ENCODE measurements at regions of chr18 and their contacts with region 1.

Region 1: DNA sequence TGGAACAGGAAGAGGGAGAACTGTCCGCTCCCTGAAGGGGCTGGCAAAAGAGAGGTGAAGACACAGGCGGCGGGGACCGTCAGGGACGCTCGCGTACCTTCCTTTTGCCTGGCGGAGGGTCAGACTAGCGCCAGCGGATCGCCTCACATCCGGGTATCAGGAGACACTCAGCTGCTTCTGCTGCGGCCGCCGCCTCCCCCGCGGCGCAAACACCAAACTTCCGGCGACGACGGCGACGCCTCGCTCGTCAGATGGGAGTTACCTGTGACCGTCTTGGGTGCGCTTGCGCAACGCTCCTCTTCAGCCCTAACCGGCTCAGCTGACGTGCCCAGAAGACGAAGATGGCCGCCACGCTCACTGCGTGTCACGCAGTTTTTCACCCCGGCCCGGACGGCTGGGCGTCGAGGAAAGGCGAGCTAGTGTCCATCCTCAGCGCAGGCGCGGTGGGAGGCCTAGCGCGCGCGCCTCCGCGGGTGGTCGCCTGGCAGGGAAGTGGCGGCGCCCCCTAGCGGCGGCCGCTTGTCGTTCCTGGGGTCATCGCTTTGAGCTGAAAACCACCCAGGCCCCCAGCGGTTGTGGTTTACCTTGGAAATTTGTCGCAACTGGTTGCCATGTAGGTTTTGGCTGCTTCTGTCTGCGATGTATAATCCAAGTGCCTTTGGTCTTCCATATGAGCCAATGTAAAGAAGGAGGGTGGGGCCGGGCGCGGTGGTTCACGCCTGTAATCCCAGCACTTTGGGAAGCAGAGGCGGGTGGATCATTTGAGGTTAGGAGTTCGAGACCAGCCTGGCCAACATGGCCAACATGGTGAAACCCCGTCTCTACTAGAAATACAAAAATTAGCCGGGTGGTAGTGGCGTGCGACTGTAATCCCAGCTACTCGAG is at the start of gene ESCO1:
- DNase-seq: peak; percentile 93
- ATAC-seq: peak; percentile 94 to 97 (median 96)
- H3K4me3 ChIP-seq: peak within 1 kb of the TSS; percentile 81 to 100 (median 92)
- H3K27ac ChIP-seq: peak within 1 kb of the TSS; percentile 86 to 99 (median 97)
- H3K4me1 ChIP-seq: peaks cover 0 to 46% (median 24%) of the 10 kb centered on the region in 9 donors
- H3K27me3 ChIP-seq: no peaks in the 10 kb centered on the region
- CTCF ChIP-seq: peak; percentile 93 to 100 (median 98)
- total RNA-seq, gene ESCO1: 8.7 to 12.9 (median 9.9) TPM

Region 2: DNA sequence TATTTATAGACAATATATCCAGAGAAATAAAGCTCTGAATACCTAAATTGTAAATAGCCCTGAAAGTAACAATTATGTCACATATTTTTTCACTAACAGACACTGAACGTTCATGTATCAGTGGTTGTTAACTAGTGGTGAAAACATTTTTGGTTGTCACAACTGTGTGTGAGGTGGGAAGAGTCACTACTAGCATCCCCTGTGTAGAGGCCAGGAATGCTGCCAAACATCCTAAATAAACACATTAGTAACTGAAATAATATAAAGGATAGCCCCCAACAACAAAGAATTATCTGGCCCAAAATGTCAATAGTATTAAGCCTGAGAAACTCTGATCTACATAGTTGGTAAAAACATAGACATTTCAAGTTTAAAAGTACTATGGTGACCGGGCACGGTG is 553.6 kb before region 1 on chr18:
- intact Hi-C with region 1: no loop called
- DNase-seq: no peak
- ATAC-seq: no peak
- H3K4me3 ChIP-seq: no peak overlapping the region
- H3K27ac ChIP-seq: no peak overlapping the region
- H3K4me1 ChIP-seq: peaks cover 0 to 49% (median 33%) of the 10 kb centered on the region in 9 donors
- H3K27me3 ChIP-seq: no peaks in the 10 kb centered on the region
- CTCF ChIP-seq: no peak

Region 3: GRCh38 chr18:21489119-21489750 is 111.5 kb before region 1 on chr18:
- intact Hi-C with region 1: loop called in 1 of 10 experiments (anchors 5 kb)
- DNase-seq: peak in 1 of 2 donors; percentile 26
- ATAC-seq: peak in 7 of 8 donors; percentile 65 to 83 (median 72)
- H3K4me3 ChIP-seq: no peak overlapping the region
- H3K27ac ChIP-seq: no peak overlapping the region
- H3K4me1 ChIP-seq: peaks cover 0 to 6% (median 0%) of the 10 kb centered on the region in 9 donors
- H3K27me3 ChIP-seq: no peaks in the 10 kb centered on the region
- CTCF ChIP-seq: peak; percentile 35 to 75 (median 72)

Region 4: DNA sequence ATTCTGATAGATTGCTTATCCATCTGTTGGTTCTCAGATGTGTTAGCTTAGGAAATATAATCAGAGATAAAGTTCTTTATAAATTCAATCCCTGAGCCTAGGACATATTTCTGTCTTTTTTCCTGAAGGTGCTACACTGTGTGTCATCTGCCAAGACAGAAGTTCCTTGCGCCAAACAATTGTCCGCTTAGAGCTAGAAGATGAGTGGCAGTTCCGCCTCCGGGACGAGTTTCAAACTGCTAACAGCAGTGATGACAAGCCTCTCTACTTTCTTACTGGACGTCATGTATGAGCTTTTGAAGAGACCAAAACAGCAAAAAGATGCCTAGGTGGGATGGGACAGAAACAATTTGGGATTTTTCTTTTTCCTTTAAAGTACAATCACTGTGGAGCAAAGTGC is 78.2 kb before region 1 on chr18:
- intact Hi-C with region 1: no loop called
- DNase-seq: no peak
- ATAC-seq: peak in 1 of 8 donors; percentile 37
- H3K4me3 ChIP-seq: no peak overlapping the region
- H3K27ac ChIP-seq: no peak overlapping the region
- H3K4me1 ChIP-seq: no peaks in the 10 kb centered on the region
- H3K27me3 ChIP-seq: no peaks in the 10 kb centered on the region
- CTCF ChIP-seq: no peak

Region 5: DNA sequence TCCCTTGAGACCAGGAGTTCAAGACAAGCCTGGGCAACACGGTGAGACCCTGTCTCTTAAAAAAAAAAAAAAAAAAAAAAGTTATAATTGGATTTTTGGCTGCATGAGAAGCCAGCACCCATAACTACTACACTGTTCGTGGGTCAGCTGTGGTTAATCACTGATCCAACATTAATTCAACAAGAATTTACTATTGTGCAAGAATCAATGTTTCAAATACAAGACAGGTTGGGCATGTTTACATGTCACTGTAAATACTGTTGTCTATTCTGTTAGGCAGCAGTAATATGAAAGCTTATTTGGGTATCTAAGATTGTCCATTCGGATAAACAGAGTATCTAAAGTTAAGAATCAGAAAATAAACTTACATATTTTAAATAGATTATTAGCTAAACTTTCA is 62.5 kb before region 1 on chr18:
- intact Hi-C with region 1: loop called in 1 of 10 experiments (anchors 10 kb)
- DNase-seq: no peak
- ATAC-seq: no peak
- H3K4me3 ChIP-seq: no peak overlapping the region
- H3K27ac ChIP-seq: no peak overlapping the region
- H3K4me1 ChIP-seq: no peaks in the 10 kb centered on the region
- H3K27me3 ChIP-seq: no peaks in the 10 kb centered on the region
- CTCF ChIP-seq: no peak

Region 6: DNA sequence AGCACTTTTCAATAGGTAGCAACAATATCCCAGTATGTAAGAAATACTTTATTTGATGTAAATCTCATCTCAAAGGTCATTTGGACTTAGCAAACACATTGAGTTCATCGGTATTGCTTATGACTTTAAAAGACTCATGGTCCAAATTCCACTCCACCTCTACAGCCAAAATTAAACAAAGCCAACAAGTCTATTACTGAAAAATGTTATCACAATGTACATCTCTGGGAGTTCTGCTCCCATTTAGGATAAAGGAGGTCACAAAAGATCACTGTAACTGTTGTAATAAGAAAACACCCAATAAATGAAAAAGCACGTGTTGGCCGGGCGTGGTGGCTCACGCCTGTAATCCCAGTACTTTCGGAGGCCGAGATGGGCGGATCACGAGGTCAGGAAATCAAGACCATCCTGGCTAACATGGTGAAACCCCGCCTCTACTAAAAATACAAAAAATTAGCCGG is 50.2 kb before region 1 on chr18:
- intact Hi-C with region 1: loop called in 1 of 10 experiments (anchors 2 kb)
- DNase-seq: no peak
- ATAC-seq: peak in 1 of 8 donors; percentile 29
- H3K4me3 ChIP-seq: no peak overlapping the region
- H3K27ac ChIP-seq: no peak overlapping the region
- H3K4me1 ChIP-seq: no peaks in the 10 kb centered on the region
- H3K27me3 ChIP-seq: no peaks in the 10 kb centered on the region
- CTCF ChIP-seq: no peak

Measured in heart right ventricle (tissue), 16 donors.